ENCODE measurements at regions of chr3 and their contacts with region 1.

Region 1: DNA sequence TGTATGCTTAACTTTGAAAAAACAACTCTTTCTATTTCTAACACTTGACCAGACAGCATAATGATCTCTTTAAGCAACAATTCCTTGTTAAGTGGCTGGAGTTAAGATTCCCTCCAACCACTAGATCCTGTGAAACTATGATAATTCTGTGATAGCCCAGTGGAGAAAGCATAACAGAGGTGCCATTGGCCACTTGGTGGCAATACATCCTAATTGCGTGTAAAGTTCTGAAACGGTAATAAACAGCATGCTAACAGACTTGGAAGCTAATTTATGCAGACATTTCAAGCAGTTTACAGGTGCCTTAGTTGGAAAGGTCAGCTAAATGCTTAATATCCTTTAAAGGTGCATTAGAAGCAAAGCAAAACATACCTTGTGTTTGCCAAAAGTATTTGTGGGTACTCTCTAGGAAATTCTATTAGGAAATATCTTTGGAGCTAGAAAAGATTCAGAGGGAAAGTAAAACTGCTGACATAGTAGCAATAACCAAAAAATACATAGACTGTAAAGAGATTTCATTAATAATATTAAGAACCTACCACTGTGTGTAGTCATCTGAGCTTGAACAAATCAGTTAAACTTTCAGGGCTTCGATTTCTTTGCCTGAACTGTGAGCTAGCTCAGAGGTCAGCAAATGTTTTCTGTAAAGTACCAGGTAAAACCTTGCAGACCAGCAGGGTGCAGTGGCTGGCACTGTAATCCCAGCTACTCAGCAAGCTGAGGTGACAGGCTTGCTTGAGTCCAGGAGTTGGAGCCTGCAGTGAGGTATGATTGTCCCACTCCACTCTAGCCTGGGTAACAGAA is 19.0 kb upstream of the CSTA start:
- DNase-seq: peak; percentile 73
- ATAC-seq: peak; percentile 98
- H3K4me3 ChIP-seq: peak overlapping the region; percentile 21; the same call in 1 of the 2 replicates
- H3K27ac ChIP-seq: no peak overlapping the region
- H3K4me1 ChIP-seq: 0 out of 2 replicates have a peak, but pooled peaks cover 3% of the 10 kb centered on the region
- H3K27me3 ChIP-seq: no peaks in the 10 kb centered on the region
- CTCF ChIP-seq: peak; percentile 52

Region 2: DNA sequence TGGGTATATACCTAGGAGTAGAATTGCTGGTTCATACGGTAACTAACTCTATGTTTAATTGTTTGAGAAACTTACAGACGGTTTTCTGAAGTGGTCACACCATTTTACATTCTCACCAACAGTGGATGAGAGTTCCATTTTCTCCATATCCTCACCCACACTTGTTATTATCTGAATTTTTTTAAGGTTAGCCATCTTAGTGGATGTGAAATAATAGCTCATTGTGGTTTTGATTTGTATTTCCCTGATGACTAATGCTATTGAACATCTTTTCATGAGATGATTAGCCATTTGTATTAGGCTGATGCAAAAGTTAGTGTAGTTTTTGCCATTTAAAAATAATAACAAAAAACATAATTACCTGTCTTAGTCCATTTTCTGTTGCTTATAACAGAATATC is 37.6 kb after region 1 on chr3:
- CTCF ChIA-PET with region 1: interaction called, 37 read pairs
- POLR2A ChIA-PET with region 1: no interaction called
- intact Hi-C with region 1: loop called (anchors 1 kb)
- DNase-seq: peak; percentile 49
- ATAC-seq: peak; percentile 49; the same call in 1 of the 2 replicates
- H3K4me3 ChIP-seq: no peak overlapping the region
- H3K27ac ChIP-seq: no peak overlapping the region
- H3K4me1 ChIP-seq: no peaks in the 10 kb centered on the region; the same call in 1 of the 2 replicates
- H3K27me3 ChIP-seq: no peaks in the 10 kb centered on the region
- CTCF ChIP-seq: no peak

Region 3: GRCh38 chr3:122356415-122356814 is 50.4 kb after region 1 on chr3:
- CTCF ChIA-PET with region 1: interaction called, 68 read pairs
- POLR2A ChIA-PET with region 1: no interaction called
- intact Hi-C with region 1: loop called (anchors 1 kb)
- DNase-seq: peak; percentile 76
- ATAC-seq: peak; percentile 72
- H3K4me3 ChIP-seq: no peak overlapping the region
- H3K27ac ChIP-seq: no peak overlapping the region
- H3K4me1 ChIP-seq: peaks cover 10% of the 10 kb centered on the region
- H3K27me3 ChIP-seq: no peaks in the 10 kb centered on the region
- CTCF ChIP-seq: peak; percentile 90

Region 4: DNA sequence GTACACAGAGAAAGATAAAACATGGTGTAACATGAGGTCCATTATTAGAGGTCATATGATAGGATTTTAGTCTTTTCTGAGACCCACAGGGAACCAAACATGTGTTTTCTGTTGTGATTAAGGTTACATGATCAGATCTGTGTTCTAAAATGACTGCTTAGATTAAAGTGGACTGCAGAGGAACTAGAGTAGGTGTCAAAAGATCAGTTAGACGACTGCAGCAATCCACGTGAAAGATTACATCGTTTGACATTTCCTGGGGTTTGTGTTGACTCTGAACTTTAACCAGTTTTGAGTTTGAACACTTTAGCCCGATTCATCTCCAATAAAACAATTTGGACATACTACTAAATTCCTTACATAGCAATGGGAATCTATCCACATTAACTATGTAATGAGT is 72.0 kb after region 1 on chr3:
- CTCF ChIA-PET with region 1: interaction called, 10 read pairs
- POLR2A ChIA-PET with region 1: no interaction called
- intact Hi-C with region 1: no loop called
- DNase-seq: no peak
- ATAC-seq: no peak
- H3K4me3 ChIP-seq: no peak overlapping the region
- H3K27ac ChIP-seq: no peak overlapping the region
- H3K4me1 ChIP-seq: peaks cover 8% of the 10 kb centered on the region
- H3K27me3 ChIP-seq: no peaks in the 10 kb centered on the region
- CTCF ChIP-seq: no peak

Region 5: GRCh38 chr3:122392868-122393844 is 87.1 kb after region 1 on chr3:
- CTCF ChIA-PET with region 1: interaction called, 13 read pairs
- POLR2A ChIA-PET with region 1: interaction called, 5 read pairs
- intact Hi-C with region 1: no loop called
- DNase-seq: peak; percentile 71
- ATAC-seq: peak; percentile 57
- H3K4me3 ChIP-seq: no peak overlapping the region
- H3K27ac ChIP-seq: no peak overlapping the region
- H3K4me1 ChIP-seq: no peaks in the 10 kb centered on the region
- H3K27me3 ChIP-seq: no peaks in the 10 kb centered on the region
- CTCF ChIP-seq: peak; percentile 93